ENCODE measurements at regions of chr5 and their contacts with region 1.

Region 1: DNA sequence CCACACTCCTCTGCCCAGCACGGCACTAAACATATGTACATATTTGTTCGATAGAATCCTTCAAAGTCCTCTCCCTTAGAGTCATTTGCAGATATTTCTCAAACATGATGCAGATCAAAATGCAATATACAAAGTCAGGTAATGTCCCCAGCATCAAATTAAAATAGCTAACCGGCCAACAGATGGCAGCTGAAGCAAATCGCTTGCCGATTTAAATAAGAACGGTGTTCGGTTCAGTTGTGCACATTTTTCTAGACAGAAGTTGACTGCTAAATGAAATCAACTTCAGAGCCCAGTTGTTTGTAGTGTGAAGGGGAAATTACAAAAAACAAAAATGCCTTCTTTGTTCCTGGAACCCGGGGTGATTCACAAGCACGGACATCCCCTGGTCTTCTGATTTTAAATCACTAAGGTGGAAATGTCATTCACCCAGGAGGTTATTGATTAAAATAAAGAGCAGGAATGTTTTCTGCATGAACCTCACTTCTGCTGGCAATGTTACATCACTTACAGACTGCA is 219.2 kb downstream of the EBF1 start:
- DNase-seq: no peak
- ATAC-seq: peak; percentile 31
- H3K4me3 ChIP-seq: peak overlapping the region; percentile 24; the same call in 1 of the 2 replicates
- H3K27ac ChIP-seq: peak overlapping the region; percentile 83
- H3K4me1 ChIP-seq: peaks cover 66% of the 10 kb centered on the region
- H3K27me3 ChIP-seq: no peaks in the 10 kb centered on the region
- CTCF ChIP-seq: peak in 2 of 3 experiments; percentile 29 to 53; a peak in 3 of 6 replicates
- EP300 ChIP-seq: peak in 1 of 2 experiments; percentile 2; a peak in 1 of 4 replicates
- POLR2A ChIP-seq: no peak
- RAD21 ChIP-seq: peak; percentile 56

Region 2: DNA sequence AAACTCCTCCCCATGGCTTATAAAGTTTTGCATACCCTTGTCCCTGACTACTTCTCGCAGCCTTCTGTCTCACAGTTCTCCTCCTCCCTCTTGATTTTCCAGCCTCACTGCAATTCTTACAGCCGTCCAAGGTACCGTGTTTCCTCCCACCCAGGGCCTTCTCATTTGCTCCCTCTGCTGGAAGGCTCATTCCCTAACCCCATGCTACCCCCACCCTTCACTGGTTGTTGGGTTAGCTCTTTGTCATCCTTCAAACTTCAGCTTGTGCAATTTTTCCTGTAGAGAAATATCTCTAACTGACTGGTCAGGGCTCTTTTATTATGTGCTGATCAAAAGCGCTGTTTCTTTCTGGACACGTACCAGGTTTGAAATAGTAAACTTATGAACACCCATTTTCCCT is 110.0 kb before region 1 on chr5:
- CTCF ChIA-PET with region 1: interaction called, 4 read pairs
- POLR2A ChIA-PET with region 1: interaction called, 5 read pairs
- RAD21 ChIA-PET with region 1: interaction called, 37 read pairs
- SMC1A ChIA-PET with region 1: interaction called, 36 read pairs
- in situ Hi-C with region 1: no loop called
- intact Hi-C with region 1: loop called (anchors 2 kb)
- DNase-seq: no peak
- ATAC-seq: no peak
- H3K4me3 ChIP-seq: no peak overlapping the region
- H3K27ac ChIP-seq: no peak overlapping the region
- H3K4me1 ChIP-seq: peaks cover 4% of the 10 kb centered on the region; the same call in 1 of the 2 replicates
- H3K27me3 ChIP-seq: no peaks in the 10 kb centered on the region
- CTCF ChIP-seq: peak in 2 of 3 experiments; percentile 17 to 38; a peak in 2 of 6 replicates
- EP300 ChIP-seq: no peak
- POLR2A ChIP-seq: no peak
- RAD21 ChIP-seq: 0 out of 2 replicates have a peak, but pooled peaks have one; percentile 15

Region 3: DNA sequence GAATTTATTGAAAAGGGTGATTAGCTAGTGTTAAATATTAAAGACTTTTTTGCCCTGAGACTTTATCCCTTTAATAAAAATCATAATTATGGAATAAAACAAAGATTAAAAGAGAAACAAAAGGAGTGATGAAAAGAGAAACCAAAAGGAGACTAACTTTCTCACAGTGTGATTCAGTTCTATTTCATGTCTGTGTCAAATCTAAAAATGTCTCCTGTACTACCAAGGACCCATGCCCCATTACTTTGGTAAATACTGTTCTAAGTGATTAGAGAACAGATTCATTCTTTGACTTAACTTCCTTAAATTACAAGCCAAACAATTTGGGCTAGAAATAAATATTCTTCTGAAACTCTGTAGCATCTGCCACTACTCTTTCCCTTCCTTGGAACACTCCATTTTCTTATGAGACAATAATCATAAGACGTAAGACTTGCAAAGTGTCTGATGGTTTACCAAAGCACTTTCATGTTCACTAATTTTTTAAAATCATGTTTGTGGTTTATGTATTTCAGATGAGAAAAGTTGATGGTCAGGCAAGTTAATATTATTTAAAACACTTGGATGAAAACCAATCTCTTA is 99.8 kb before region 1 on chr5:
- CTCF ChIA-PET with region 1: interaction called, 4 read pairs
- POLR2A ChIA-PET with region 1: interaction called, 5 read pairs
- RAD21 ChIA-PET with region 1: interaction called, 37 read pairs
- SMC1A ChIA-PET with region 1: interaction called, 36 read pairs
- in situ Hi-C with region 1: no loop called
- intact Hi-C with region 1: loop called (anchors 2 kb)
- DNase-seq: peak; percentile 28
- ATAC-seq: peak; percentile 85
- H3K4me3 ChIP-seq: no peak overlapping the region
- H3K27ac ChIP-seq: peak overlapping the region; percentile 46
- H3K4me1 ChIP-seq: peaks cover 18% of the 10 kb centered on the region
- H3K27me3 ChIP-seq: no peaks in the 10 kb centered on the region
- CTCF ChIP-seq: no peak
- EP300 ChIP-seq: no peak
- POLR2A ChIP-seq: no peak
- RAD21 ChIP-seq: no peak

Region 4: GRCh38 chr5:158898185-158899177 is 17.9 kb after region 1 on chr5:
- CTCF ChIA-PET with region 1: interaction called, 9 read pairs
- POLR2A ChIA-PET with region 1: interaction called, 7 read pairs
- RAD21 ChIA-PET with region 1: interaction called, 41 read pairs
- SMC1A ChIA-PET with region 1: interaction called, 131 read pairs
- in situ Hi-C with region 1: no loop called
- intact Hi-C with region 1: no loop called
- DNase-seq: no peak
- ATAC-seq: peak; percentile 82
- H3K4me3 ChIP-seq: 0 out of 2 replicates have a peak overlapping the region, but pooled peaks have one; percentile 15
- H3K27ac ChIP-seq: peak overlapping the region; percentile 83
- H3K4me1 ChIP-seq: peaks cover 14% of the 10 kb centered on the region
- H3K27me3 ChIP-seq: no peaks in the 10 kb centered on the region
- CTCF ChIP-seq: no peak
- EP300 ChIP-seq: peak; percentile 70 to 74; a peak in 3 of 4 replicates
- POLR2A ChIP-seq: no peak
- RAD21 ChIP-seq: no peak

Region 5: GRCh38 chr5:158910782-158911692 is 30.5 kb after region 1 on chr5:
- CTCF ChIA-PET with region 1: interaction called, 5 read pairs
- POLR2A ChIA-PET with region 1: interaction called, 12 read pairs
- RAD21 ChIA-PET with region 1: interaction called, 16 read pairs
- SMC1A ChIA-PET with region 1: interaction called, 131 read pairs
- in situ Hi-C with region 1: no loop called
- intact Hi-C with region 1: no loop called
- DNase-seq: no peak
- ATAC-seq: peak; percentile 88
- H3K4me3 ChIP-seq: no peak overlapping the region
- H3K27ac ChIP-seq: peak overlapping the region; percentile 50
- H3K4me1 ChIP-seq: peaks cover 32% of the 10 kb centered on the region
- H3K27me3 ChIP-seq: no peaks in the 10 kb centered on the region
- CTCF ChIP-seq: no peak
- EP300 ChIP-seq: peak; percentile 29 to 85; a peak in 2 of 4 replicates
- POLR2A ChIP-seq: no peak
- RAD21 ChIP-seq: no peak

Region 6: GRCh38 chr5:159094745-159095144 is 214.2 kb after region 1 on chr5:
- CTCF ChIA-PET with region 1: interaction called, 6 read pairs
- POLR2A ChIA-PET with region 1: interaction called, 18 read pairs
- RAD21 ChIA-PET with region 1: interaction called, 22 read pairs
- SMC1A ChIA-PET with region 1: interaction called, 28 read pairs
- in situ Hi-C with region 1: no loop called
- intact Hi-C with region 1: no loop called
- DNase-seq: no peak
- ATAC-seq: peak; percentile 35
- H3K4me3 ChIP-seq: peak overlapping the region; percentile 88
- H3K27ac ChIP-seq: peak overlapping the region; percentile 68
- H3K4me1 ChIP-seq: peaks cover 5% of the 10 kb centered on the region; the same call in 1 of the 2 replicates
- H3K27me3 ChIP-seq: no peaks in the 10 kb centered on the region
- CTCF ChIP-seq: no peak
- EP300 ChIP-seq: no peak
- POLR2A ChIP-seq: no peak
- RAD21 ChIP-seq: no peak

Region 7: DNA sequence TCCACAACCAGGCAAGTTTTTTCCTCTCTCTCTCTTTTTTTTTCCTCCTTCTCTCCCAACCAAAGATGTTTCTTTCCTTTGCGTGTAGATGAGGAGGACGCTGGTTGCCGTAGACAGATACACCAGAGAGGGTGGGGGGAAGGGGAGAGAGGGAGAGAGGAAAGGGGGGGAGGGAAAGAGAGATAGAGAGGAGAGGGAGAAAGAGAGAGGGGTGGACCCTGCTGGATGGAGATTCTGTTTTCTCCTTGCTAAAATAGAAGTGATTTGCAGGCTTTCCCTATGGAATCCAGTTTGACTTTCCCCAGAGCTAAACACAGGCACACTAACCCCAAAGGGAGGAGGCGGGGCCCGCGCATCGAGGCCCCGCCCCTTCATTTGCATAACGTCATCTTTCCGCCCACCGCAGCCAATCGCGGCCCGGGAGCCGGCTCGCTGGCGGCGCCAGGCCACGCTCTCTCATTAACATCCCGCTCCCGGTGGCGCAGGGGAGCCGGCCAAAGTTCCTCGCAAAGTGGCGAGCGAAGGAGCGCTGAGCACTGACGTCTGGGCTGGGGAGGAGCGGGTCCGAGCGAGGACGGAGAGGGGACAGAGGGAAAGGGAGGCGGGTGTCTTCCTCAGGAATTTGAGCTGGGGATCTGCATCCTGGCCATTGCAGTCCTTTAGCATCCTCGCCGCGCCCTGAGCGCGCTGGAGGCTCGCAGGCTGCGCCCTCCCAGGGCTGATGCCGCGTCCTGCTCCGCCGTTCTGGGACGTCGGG is 219.7 kb after region 1 on chr5:
- CTCF ChIA-PET with region 1: interaction called, 20 read pairs
- POLR2A ChIA-PET with region 1: interaction called, 18 read pairs
- RAD21 ChIA-PET with region 1: interaction called, 31 read pairs
- SMC1A ChIA-PET with region 1: interaction called, 29 read pairs
- in situ Hi-C with region 1: no loop called
- intact Hi-C with region 1: loop called (anchors 2 kb)
- DNase-seq: peak; percentile 81
- ATAC-seq: peak; percentile 58
- H3K4me3 ChIP-seq: peak overlapping the region; percentile 67
- H3K27ac ChIP-seq: peak overlapping the region; percentile 67
- H3K4me1 ChIP-seq: peaks cover 5% of the 10 kb centered on the region
- H3K27me3 ChIP-seq: no peaks in the 10 kb centered on the region
- CTCF ChIP-seq: no peak
- EP300 ChIP-seq: peak in 1 of 2 experiments; percentile 1; a peak in 2 of 4 replicates
- POLR2A ChIP-seq: peak; percentile 93
- RAD21 ChIP-seq: no peak

Measured in GM12878 (cell line).